ENCODE measurements at regions of chr6 and their contacts with region 1.

Region 1: GRCh38 chr6:16761471-16762267 is 409 bp upstream of the ATXN1 start:
- DNase-seq: peak; percentile 95
- H3K4me3 ChIP-seq: peak overlapping the region; percentile 80 to 96 (median 84)
- H3K27ac ChIP-seq: peak overlapping the region; percentile 97 to 99 (median 98)
- H3K4me1 ChIP-seq: peaks cover 0 to 64% (median 51%) of the 10 kb centered on the region in 4 donors
- H3K27me3 ChIP-seq: no peaks in the 10 kb centered on the region
- CTCF ChIP-seq: peak in 1 of 4 experiments; percentile 23
- EP300 ChIP-seq: peak in 1 of 4 donors; percentile 6
- POLR2A ChIP-seq: peak; percentile 45 to 52

Region 2: DNA sequence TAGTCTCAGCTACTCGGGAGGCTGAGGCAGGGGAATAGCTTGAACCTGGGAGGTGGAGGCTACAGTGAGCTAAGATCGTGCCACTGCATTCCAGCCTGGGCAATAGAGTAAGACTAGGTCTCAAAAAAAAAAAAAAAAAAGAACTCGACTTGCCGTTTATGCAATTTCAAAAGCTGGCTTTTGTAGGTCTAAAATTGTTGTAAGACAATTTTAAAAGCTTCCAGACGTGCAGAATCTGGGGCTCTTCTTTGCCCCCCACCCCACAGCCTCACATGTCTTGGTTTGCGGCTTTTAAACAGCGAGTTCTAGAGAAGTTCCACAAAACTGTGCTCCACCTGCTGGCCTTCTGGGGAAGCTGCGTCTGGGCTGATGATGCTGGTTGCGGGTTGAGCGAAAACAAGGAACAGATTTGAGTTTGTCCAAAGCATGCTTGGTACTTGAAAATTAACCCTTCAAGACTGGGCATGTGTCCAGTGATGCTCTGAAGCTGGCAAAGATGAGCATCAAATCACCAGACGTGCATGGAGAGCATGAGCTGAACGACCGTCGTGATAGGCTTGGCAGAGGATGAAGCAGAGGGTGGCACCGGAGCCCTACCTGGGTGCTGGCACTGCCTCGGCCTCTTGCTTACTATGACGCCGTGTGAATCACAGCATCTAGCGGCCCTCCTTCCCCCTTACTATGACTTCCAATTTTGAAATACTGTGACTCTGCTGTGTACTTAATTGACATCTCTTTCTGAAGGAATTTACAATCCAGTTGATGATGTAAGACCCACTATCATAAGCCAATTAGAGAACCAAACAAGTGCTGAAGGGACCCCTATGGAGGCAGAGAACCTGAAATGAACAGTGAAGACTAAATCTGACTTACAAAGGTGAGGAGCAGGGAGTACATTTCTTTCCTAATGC is 351.9 kb before region 1 on chr6:
- intact Hi-C with region 1: loop called (anchors 10 kb)
- DNase-seq: peak; percentile 74
- H3K4me3 ChIP-seq: no peak overlapping the region
- H3K27ac ChIP-seq: peak overlapping the region in 2 of 4 donors; percentile 1 to 5
- H3K4me1 ChIP-seq: peaks cover 0 to 53% (median 32%) of the 10 kb centered on the region in 4 donors
- H3K27me3 ChIP-seq: no peaks in the 10 kb centered on the region
- CTCF ChIP-seq: peak; percentile 52 to 88 (median 70)
- EP300 ChIP-seq: no peak
- POLR2A ChIP-seq: no peak

Region 3: GRCh38 chr6:16503970-16504415 is 257.7 kb before region 1 on chr6:
- intact Hi-C with region 1: loop called (anchors 2 kb)
- DNase-seq: no peak
- H3K4me3 ChIP-seq: no peak overlapping the region
- H3K27ac ChIP-seq: peak overlapping the region in 1 of 4 donors; percentile 73
- H3K4me1 ChIP-seq: peaks cover 0 to 27% (median 25%) of the 10 kb centered on the region in 4 donors
- H3K27me3 ChIP-seq: no peaks in the 10 kb centered on the region
- CTCF ChIP-seq: no peak
- EP300 ChIP-seq: no peak
- POLR2A ChIP-seq: no peak

Region 4: GRCh38 chr6:16684896-16685554 is 76.6 kb before region 1 on chr6:
- intact Hi-C with region 1: loop called (anchors 5 kb)
- DNase-seq: no peak
- H3K4me3 ChIP-seq: no peak overlapping the region
- H3K27ac ChIP-seq: no peak overlapping the region
- H3K4me1 ChIP-seq: peaks cover 0 to 66% (median 47%) of the 10 kb centered on the region in 4 donors
- H3K27me3 ChIP-seq: no peaks in the 10 kb centered on the region
- CTCF ChIP-seq: no peak
- EP300 ChIP-seq: no peak
- POLR2A ChIP-seq: no peak

Region 5: GRCh38 chr6:16964553-16965501 is 203.2 kb after region 1 on chr6:
- intact Hi-C with region 1: loop called (anchors 2 kb)
- DNase-seq: peak; percentile 87
- H3K4me3 ChIP-seq: peak overlapping the region in 1 of 4 donors; percentile 14
- H3K27ac ChIP-seq: no peak overlapping the region
- H3K4me1 ChIP-seq: peaks cover 0 to 10% (median 4%) of the 10 kb centered on the region in 4 donors
- H3K27me3 ChIP-seq: no peaks in the 10 kb centered on the region
- CTCF ChIP-seq: peak; percentile 67 to 89 (median 82)
- EP300 ChIP-seq: no peak
- POLR2A ChIP-seq: peak in 1 of 2 donors; percentile 12

Region 6: DNA sequence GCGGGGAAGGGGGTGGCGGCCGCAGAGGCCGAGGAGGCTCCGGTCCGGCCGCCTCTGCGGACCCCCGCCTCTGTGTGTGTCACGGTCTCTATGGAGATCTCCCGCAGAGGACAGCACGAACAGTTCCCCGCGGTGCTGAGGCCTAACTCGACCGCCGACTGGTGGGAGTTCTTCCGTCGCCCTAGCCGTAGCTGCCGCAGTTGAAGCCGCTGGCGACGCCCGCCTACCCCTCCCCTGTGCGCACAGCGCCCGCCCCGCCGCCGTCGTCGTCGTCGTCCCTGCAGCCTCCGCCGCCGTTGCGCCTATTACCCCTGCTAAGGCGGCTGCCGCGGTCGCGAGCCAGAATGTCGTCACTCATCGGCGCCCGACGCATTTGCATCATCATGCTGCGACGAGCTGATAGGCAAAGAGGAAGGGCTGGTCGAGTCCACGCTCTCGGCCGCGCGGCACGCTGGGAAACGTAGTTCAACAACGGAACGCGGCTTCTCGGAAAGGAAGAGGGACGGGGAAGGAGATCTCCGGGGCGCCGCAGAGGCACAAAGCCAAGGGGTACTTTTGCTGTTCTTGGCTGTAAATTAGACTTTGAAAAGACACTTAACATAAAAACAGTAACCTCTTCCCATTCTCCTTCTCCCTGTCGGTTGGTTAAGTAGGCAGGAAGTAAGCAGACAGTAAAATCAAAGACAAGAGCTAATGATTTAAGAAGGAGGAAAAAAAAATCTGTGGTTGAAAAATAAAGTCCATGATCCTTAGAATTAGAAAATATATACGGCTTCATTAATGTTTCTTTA is 945.1 kb after region 1 on chr6 and contains the start of gene NUP153:
- intact Hi-C with region 1: loop called (anchors 5 kb)
- DNase-seq: peak; percentile 99
- H3K4me3 ChIP-seq: peak within 1 kb of the TSS; percentile 89 to 98 (median 89)
- H3K27ac ChIP-seq: peak within 1 kb of the TSS; percentile 99 to 100 (median 99)
- H3K4me1 ChIP-seq: peaks cover 0 to 38% (median 33%) of the 10 kb centered on the region in 4 donors
- H3K27me3 ChIP-seq: no peaks in the 10 kb centered on the region
- CTCF ChIP-seq: no peak
- EP300 ChIP-seq: peak in 2 of 4 donors; percentile 72 to 90
- POLR2A ChIP-seq: peak; percentile 84 to 92
- total RNA-seq, gene NUP153: 30.0 to 31.4 (median 30.6) TPM